A549 (cell line): ENCODE measurements at regions of chr10 and their contacts with region 1.

Region 1: GRCh38 chr10:73263948-73264347 is 11.5 kb upstream of the MRPS16 start:
- DNase-seq: peak; percentile 17 to 41
- ATAC-seq: peak; percentile 45 to 54; a peak in 4 of 6 replicates
- H3K4me3 ChIP-seq: no peak overlapping the region
- H3K27ac ChIP-seq: peak overlapping the region; percentile 81 to 85; a peak in 4 of 6 replicates
- H3K4me1 ChIP-seq: peaks cover 31% of the 10 kb centered on the region
- CTCF ChIP-seq: peak; percentile 80
- EP300 ChIP-seq: no peak
- POLR2A ChIP-seq: no peak
- RAD21 ChIP-seq: peak; percentile 55 to 65

Region 2: DNA sequence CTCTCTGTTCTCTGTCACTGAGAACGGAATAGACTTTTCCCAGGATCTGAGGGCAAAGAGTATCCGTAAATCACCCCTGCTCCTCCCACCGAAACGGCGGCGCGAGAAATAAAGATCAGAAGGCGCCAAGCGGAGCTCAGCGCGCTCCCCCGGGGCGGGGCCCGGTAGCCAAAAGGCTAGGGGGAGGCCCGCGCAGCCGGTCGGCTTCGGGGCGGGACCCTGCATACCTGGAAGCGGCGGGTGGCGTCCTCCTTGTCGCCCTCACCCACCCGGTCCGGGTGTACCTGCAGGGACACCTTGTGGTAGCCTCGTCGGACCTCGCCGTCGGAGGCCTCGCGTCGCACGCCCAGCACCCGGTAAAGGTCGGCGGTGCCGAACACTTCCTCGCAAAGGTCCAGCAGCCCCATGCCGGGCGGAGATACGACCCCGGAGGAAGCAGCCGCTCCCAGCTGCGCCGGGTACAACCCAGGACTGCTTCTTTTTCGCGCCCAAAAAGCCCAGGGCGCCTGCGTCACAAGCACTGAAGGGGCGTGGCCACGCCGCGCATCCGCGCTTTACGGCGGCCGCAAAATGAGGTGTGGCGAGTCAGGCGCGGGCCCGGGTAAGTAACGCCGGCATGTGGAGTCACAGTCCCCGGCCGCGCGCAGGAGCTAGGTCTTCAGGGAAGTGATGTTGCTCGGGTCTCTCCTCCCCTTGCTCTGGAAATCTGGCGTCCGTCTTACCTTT is 17.0 kb before region 1 on chr10 and contains the start of gene DNAJC9:
- CTCF ChIA-PET with region 1: interaction called, 10 read pairs
- POLR2A ChIA-PET with region 1: interaction called, 11 read pairs
- DNase-seq: peak; percentile 91 to 98
- ATAC-seq: peak; percentile 89 to 91
- H3K4me3 ChIP-seq: peak within 1 kb of the TSS; percentile 78
- H3K27ac ChIP-seq: peak within 1 kb of the TSS; percentile 88 to 89
- H3K4me1 ChIP-seq: peaks cover 36% of the 10 kb centered on the region
- CTCF ChIP-seq: peak; percentile 13; the same call in 1 of the 3 replicates
- EP300 ChIP-seq: no peak
- POLR2A ChIP-seq: peak; percentile 85
- RAD21 ChIP-seq: peak in 1 of 2 experiments; percentile 26; a peak in 2 of 5 replicates
- polyA plus RNA-seq, gene DNAJC9: 42.7 and 56.3 TPM in 2 replicates

Region 3: DNA sequence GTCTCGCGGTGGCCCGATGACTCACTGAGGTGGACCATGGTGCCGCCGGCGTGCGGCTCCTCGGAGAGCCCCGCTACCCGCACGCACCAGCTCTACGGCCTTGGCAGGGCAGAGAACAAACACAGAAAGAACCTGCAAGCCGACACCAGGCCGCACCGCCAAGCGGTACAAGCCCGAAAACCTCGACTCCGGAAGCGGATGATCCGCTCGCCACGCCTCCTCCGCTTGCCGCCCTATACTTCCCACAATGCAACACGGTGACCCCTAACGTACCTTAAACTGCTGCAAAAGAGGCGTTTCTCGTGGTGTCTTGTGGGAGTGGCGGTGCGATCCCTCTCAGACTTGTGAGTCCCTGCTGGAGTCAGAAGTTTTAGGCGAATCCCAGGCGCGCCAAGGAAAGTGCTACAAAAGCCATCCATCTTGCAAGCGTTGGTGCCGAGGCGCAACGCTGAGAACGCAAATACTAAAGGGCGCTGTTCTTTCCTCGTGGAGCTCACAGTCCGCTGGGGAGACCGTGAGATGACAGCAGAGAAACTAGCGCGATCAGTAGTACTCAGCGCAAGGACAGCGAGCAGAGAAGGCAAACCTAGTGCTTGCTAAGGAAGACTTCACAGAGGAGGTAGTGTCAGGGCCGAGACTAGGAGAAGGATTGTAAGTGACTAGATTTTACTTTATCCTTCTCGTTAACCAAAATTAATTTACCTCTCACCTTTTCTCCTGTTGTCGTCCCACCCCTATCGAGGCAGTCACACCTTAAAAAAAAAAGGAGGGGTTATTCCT is 11.3 kb before region 1 on chr10 and contains the start of gene MRPS16:
- CTCF ChIA-PET with region 1: interaction called, 10 read pairs
- POLR2A ChIA-PET with region 1: interaction called, 11 read pairs
- DNase-seq: peak; percentile 96 to 99
- ATAC-seq: peak; percentile 90 to 94
- H3K4me3 ChIP-seq: peak within 1 kb of the TSS; percentile 94
- H3K27ac ChIP-seq: peak within 1 kb of the TSS; percentile 94 to 95
- H3K4me1 ChIP-seq: peaks cover 26% of the 10 kb centered on the region
- CTCF ChIP-seq: no peak
- EP300 ChIP-seq: no peak; a peak in 1 of 5 replicates
- POLR2A ChIP-seq: peak; percentile 72
- RAD21 ChIP-seq: no peak
- polyA plus RNA-seq, gene MRPS16: 132 and 162 TPM in 2 replicates

Region 4: GRCh38 chr10:73358331-73359279 is 94.7 kb after region 1 on chr10 and contains the start of gene CFAP70:
- CTCF ChIA-PET with region 1: interaction called, 12 read pairs
- POLR2A ChIA-PET with region 1: interaction called, 4 read pairs
- DNase-seq: peak; percentile 95 to 96
- ATAC-seq: peak; percentile 93 to 98
- H3K4me3 ChIP-seq: peak within 1 kb of the TSS; percentile 67
- H3K27ac ChIP-seq: peak within 1 kb of the TSS; percentile 65 to 83
- H3K4me1 ChIP-seq: peaks cover 6% of the 10 kb centered on the region; the same call in 1 of the 3 replicates
- CTCF ChIP-seq: no peak
- EP300 ChIP-seq: no peak
- POLR2A ChIP-seq: peak; percentile 62
- RAD21 ChIP-seq: no peak
- polyA plus RNA-seq, gene CFAP70: 0.95 and 0.98 TPM in 2 replicates

Region 5: GRCh38 chr10:73413528-73414229 is 149.7 kb after region 1 on chr10 and contains the start of gene ANXA7:
- CTCF ChIA-PET with region 1: interaction called, 11 read pairs
- POLR2A ChIA-PET with region 1: interaction called, 7 read pairs
- DNase-seq: peak; percentile 88 to 98
- ATAC-seq: peak; percentile 95 to 98
- H3K4me3 ChIP-seq: peak within 1 kb of the TSS; percentile 76
- H3K27ac ChIP-seq: peak within 1 kb of the TSS; percentile 88 to 98
- H3K4me1 ChIP-seq: peaks cover 27% of the 10 kb centered on the region; the same call in 2 of the 3 replicates
- CTCF ChIP-seq: peak; percentile 24; the same call in 1 of the 3 replicates
- EP300 ChIP-seq: no peak
- POLR2A ChIP-seq: peak; percentile 62
- RAD21 ChIP-seq: no peak
- polyA plus RNA-seq, gene ANXA7: 150 and 161 TPM in 2 replicates

Region 6: GRCh38 chr10:73495884-73496674 is 232.1 kb after region 1 on chr10 and contains the start of gene PPP3CB:
- CTCF ChIA-PET with region 1: no interaction called
- POLR2A ChIA-PET with region 1: interaction called, 10 read pairs
- DNase-seq: peak; percentile 86 to 96
- ATAC-seq: peak; percentile 90 to 93
- H3K4me3 ChIP-seq: peak within 1 kb of the TSS; percentile 77
- H3K27ac ChIP-seq: peak within 1 kb of the TSS; percentile 90 to 91
- H3K4me1 ChIP-seq: peaks cover 21% of the 10 kb centered on the region; the same call in 2 of the 3 replicates
- CTCF ChIP-seq: no peak
- EP300 ChIP-seq: no peak
- POLR2A ChIP-seq: no peak; the same call in 1 of the 2 replicates
- RAD21 ChIP-seq: no peak
- polyA plus RNA-seq, gene PPP3CB: 25.4 and 25.7 TPM in 2 replicates